RWPE1 (cell line): ENCODE measurements at regions of chr2 and their contacts with region 1.

Region 1: DNA sequence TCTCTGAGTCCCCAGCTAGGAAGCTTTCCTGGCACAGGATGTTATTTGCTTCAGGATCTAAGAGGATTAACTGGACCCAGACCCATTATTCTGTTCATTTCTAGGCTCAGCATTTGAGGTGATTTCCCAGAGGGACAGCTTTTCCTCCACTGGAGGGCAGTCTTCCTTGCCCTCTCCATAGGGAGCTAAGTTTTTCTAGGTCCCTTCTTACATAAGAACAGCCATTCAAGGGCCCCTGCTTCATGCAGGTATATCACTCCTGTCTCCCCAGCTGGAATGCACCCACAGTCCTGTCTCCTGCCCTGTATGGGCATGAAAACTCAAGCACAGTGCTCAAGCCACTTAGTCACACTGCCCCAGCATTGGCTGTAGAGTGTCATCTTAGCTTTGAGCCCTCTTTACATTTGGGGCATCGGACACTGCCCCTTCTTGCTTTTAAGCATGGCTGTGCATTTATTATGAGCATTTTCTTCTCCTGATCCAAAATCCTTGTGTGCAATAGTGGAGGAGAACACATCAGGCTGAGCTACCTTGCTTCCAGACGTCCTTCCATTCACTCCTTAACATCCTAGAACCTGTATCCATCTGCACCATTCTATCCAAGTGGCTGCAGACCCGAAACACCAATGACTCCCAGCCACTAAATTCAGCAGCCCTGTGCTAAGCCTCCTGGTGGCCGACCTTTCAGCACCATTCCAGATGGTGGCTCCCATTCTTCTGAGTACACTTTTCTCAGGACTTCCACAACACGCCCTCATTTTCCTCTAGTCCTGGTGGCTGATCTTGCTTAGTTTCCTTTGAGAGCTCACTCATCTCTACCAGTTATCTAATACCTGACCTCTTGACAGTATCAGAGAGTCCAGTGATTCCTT is 80.0 kb downstream of the COPS8 start:
- DNase-seq: no peak
- H3K27ac ChIP-seq: no peak overlapping the region
- CTCF ChIP-seq: 0 out of 2 replicates have a peak, but pooled peaks have one; percentile 15

Region 2: DNA sequence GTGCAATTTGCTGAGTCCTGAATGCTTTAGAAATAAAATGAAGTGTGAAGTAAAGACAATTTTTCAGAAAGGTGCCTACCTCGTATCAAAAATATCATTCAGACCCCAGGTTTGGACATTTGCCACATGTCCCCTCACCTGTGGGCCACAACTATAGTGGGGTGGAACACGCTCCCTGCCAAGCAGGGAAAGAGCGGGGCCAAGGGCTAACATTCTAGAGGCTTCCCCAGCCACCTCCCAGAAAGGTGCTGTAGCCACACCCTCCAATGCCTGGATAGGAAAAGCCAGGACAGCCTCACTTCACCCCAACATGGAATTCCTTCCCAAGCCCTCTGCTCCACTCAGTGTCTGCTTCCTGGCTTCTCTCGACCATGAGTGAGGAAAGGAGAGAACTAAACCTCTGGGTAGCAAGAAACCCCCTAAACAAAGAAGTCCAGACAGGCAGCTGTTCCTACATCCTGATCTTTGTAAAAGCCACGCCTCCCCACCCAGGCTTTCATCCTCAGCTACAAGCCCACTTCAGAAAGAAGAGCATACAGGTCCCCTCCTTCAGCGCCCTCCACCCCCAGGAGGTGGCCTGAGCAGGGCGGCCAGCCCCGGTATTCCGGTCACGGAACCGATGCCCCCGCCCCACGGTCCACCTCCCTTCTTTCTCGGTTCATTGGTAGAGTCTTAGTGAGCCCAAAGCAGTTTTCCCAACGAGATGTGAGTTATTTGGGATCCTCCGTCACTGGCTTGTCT is 246.2 kb after region 1 on chr2:
- CTCF ChIA-PET with region 1: interaction called, 29 read pairs
- POLR2A ChIA-PET with region 1: no interaction called
- DNase-seq: no peak
- H3K27ac ChIP-seq: no peak overlapping the region
- CTCF ChIP-seq: no peak